Pancreas (tissue), 10 donors: ENCODE measurements at regions of chr5 and their contacts with region 1.

Region 1: DNA sequence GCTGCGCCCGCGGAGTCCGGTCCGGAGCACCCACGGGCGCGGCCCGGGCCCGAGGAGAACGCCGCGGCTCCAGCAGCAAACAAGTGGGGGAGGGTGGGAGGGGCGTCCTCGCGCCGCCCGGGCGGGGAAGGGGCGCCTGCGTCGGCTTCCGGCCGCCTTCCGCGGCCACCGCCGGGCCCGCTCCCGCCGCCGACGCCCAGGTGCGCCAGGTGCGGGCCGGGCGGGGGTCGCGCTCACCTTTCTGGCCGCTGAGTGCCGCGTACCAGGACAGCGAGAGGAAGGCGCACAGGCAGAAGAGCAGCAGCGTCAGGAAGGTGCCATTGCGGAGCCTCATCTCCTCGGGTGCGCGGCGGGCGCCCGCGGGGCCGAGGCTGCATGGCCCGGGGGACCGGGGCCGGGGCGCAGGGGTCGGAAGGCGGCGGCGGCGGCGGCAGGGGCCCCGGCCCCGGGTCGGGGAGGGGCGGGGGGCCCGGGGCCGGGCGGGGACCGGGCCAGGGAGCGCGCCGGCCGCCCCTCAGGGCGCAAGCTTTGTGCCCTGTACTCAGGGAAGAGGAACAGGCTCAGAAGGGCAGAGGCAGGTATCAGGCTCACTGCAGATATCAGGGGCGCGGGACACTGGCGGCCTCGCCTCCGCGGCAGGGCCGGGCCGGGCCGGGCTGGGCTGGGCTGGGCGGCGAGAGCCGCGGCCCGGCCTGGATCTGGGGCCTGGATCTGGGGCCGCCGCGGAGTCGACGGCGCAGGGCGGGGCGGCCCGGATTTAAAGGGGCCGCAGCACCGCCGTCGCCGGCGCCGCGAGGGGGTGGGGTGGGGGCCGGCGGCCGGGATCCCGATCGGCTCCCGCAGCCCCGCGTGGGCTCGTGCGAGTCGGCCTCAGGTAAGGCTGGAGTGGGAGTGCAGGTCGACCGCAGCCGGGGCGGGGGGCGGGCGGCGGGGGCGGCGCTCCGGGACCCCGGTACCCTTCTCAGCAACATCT is at the start of gene MGAT4B:
- DNase-seq: peak; percentile 80 to 93 (median 84)
- ATAC-seq: peak; percentile 80 to 87 (median 86)
- H3K4me3 ChIP-seq: peak within 1 kb of the TSS; percentile 77 to 91 (median 84)
- H3K27ac ChIP-seq: peak within 1 kb of the TSS; percentile 81 to 94 (median 88)
- H3K4me1 ChIP-seq: peaks cover 0 to 22% (median 0%) of the 10 kb centered on the region in 3 donors
- H3K27me3 ChIP-seq: no peaks in the 10 kb centered on the region
- CTCF ChIP-seq: no peak
- total RNA-seq, gene MGAT4B: 33.7 to 97.5 (median 45.9) TPM

Region 2: GRCh38 chr5:179643556-179643955 is 163.0 kb before region 1 on chr5:
- intact Hi-C with region 1: no loop called
- DNase-seq: peak in 1 of 6 donors; percentile 21
- ATAC-seq: no peak
- H3K4me3 ChIP-seq: no peak overlapping the region
- H3K27ac ChIP-seq: no peak overlapping the region
- H3K4me1 ChIP-seq: no peaks in the 10 kb centered on the region
- H3K27me3 ChIP-seq: no peaks in the 10 kb centered on the region
- CTCF ChIP-seq: no peak

Region 3: GRCh38 chr5:179900711-179901110 is 94.2 kb after region 1 on chr5:
- intact Hi-C with region 1: loop called in 1 of 3 experiments (anchors 5 kb)
- DNase-seq: peak in 5 of 6 donors; percentile 38 to 69 (median 44)
- ATAC-seq: peak; percentile 81 to 95 (median 86)
- H3K4me3 ChIP-seq: no peak overlapping the region
- H3K27ac ChIP-seq: no peak overlapping the region
- H3K4me1 ChIP-seq: no peaks in the 10 kb centered on the region
- H3K27me3 ChIP-seq: no peaks in the 10 kb centered on the region
- CTCF ChIP-seq: no peak

Region 4: GRCh38 chr5:179914032-179914755 is 107.7 kb after region 1 on chr5:
- intact Hi-C with region 1: loop called in 1 of 3 experiments (anchors 10 kb)
- DNase-seq: no peak
- ATAC-seq: peak in 3 of 4 donors; percentile 51 to 78 (median 67)
- H3K4me3 ChIP-seq: no peak overlapping the region
- H3K27ac ChIP-seq: no peak overlapping the region
- H3K4me1 ChIP-seq: no peaks in the 10 kb centered on the region
- H3K27me3 ChIP-seq: no peaks in the 10 kb centered on the region
- CTCF ChIP-seq: no peak